GM13976 (cell line): ENCODE measurements at regions of chr1 and their contacts with region 1.

Region 1: DNA sequence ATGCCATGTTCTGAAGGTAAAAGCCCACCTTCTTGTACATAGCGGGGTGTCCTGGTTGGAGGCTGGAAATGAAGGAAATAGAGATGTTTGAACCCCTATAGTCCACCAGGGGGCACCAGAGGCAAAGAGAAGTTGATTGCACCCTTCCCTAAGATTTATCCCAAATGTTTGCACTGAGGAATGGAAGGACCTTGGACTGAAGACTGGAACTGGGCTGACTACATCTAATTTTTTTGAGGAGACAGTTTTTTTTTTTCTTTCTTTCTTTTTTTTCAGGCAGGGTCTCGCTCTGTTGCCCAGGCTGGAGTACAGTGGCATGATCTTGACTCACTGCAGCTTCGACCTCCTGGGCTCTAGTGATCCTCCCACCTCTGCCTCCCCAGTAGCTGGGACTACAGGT is 55.3 kb upstream of the EIF4G3 start:
- DNase-seq: peak; percentile 71
- CTCF ChIP-seq: peak; percentile 62

Region 2: DNA sequence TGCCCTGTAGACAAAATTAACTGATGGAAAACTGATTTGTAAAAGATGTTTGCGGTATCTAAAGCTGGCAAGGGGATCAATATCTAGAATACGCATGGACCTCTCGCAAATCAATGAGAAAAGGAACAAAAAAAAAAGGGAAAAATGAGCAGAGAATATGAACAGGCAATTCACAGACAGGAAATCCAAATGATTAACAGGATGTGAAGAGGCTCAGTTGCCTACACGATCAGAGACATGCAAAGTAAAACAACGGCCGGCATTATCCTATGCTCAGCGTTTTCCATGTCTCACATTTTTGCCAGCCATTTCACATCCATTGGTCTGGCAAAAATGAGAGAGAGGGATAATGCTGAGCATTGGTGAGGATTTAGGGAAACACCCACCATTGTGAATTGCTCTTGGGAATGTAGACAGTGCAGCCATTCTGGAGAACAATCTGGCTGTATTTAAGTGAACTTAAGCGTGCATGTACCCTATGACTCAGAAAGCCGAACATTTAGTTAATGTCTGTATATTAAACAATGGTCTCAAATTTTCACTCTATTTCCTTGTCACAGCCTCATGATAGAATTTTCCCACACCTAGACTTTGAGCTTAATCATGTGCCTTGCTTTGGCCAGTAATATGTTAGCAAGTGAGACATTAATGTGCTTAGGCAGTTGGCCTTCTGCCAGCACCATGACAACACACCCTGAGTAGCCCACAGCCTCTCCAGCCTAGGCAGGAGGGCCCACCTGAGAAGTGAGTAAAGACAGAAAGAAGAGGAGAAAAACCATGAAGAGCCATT is 146.9 kb after region 1 on chr1:
- in situ Hi-C with region 1: loop called (anchors 10 kb)
- DNase-seq: no peak
- CTCF ChIP-seq: no peak

Region 3: GRCh38 chr1:21963477-21964217 is 731.6 kb after region 1 on chr1:
- in situ Hi-C with region 1: loop called (anchors 25 kb)
- DNase-seq: peak; percentile 84
- CTCF ChIP-seq: peak; percentile 70